GM10248 (cell line): ENCODE measurements at regions of chr20 and their contacts with region 1.

Region 1: DNA sequence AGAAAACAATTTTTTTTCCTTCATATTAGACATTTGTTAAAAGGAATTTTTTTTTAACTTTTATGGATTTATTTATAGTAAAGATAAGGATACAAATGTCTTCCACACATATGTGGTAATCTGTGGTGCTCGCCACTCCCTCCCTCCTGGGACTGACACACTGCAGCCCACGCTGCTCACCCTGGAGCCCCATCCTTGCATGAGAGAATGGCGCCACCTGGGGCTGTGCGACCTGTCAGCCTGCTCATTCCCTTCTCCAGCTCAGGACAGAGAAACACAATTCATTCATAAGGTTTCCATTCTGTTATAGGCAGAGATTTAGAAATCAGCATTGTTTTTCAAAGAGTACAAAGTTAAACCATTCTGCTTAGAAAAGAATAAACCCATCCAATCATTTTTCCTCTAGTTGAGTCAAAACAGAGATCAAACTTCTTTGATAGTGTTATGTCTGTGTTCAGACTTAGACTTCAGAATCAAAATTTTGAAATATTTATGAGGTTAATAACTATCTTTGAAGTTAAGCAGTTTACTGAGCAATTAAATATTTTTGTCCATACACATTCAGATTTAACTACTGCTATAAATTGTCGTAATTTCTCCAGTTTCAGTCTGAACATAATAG is 42.8 kb upstream of the DYNLRB1 start:
- DNase-seq: peak; percentile 50
- CTCF ChIP-seq: peak; percentile 64

Region 2: GRCh38 chr20:34268851-34269636 is 204.3 kb before region 1 on chr20:
- CTCF ChIA-PET with region 1: no interaction called
- POLR2A ChIA-PET with region 1: no interaction called
- DNase-seq: no peak
- CTCF ChIP-seq: no peak

Region 3: GRCh38 chr20:34452281-34452982 is 20.9 kb before region 1 on chr20:
- CTCF ChIA-PET with region 1: no interaction called
- POLR2A ChIA-PET with region 1: no interaction called
- DNase-seq: no peak
- CTCF ChIP-seq: no peak

Region 4: GRCh38 chr20:34493646-34494045 is 20.3 kb after region 1 on chr20:
- CTCF ChIA-PET with region 1: interaction called, 14 read pairs
- POLR2A ChIA-PET with region 1: no interaction called
- DNase-seq: no peak
- CTCF ChIP-seq: no peak